ENCODE measurements at regions of chr21 and their contacts with region 1.

Region 1: GRCh38 chr21:44454747-44455523 is at the start of gene LRRC3:
- DNase-seq: peak; percentile 96
- ATAC-seq: peak; percentile 97
- H3K4me3 Mint-ChIP-seq: peak within 1 kb of the TSS; percentile 69
- H3K27ac Mint-ChIP-seq: no peak within 1 kb of the TSS
- H3K4me1 Mint-ChIP-seq: peaks cover 4% of the 10 kb centered on the region; the same call in 1 of the 2 replicates
- H3K27me3 Mint-ChIP-seq: peaks cover 17% of the 10 kb centered on the region
- CTCF ChIP-seq: no peak
- total RNA-seq, gene LRRC3: 4.4 to 5.7 TPM (median 4.7 TPM) in 3 replicates

Region 2: GRCh38 chr21:44338971-44339910 is 115.7 kb before region 1 on chr21 and contains the start of gene CFAP410:
- CTCF ChIA-PET with region 1: interaction called, 13 read pairs
- POLR2A ChIA-PET with region 1: interaction called, 4 read pairs
- DNase-seq: peak; percentile 95
- ATAC-seq: peak; percentile 90
- H3K4me3 Mint-ChIP-seq: peak within 1 kb of the TSS; percentile 84
- H3K27ac Mint-ChIP-seq: peak within 1 kb of the TSS; percentile 93
- H3K4me1 Mint-ChIP-seq: peaks cover 38% of the 10 kb centered on the region
- H3K27me3 Mint-ChIP-seq: no peaks in the 10 kb centered on the region
- CTCF ChIP-seq: no peak
- total RNA-seq, gene CFAP410: 14.0 to 19.3 TPM (median 15.8 TPM) in 3 replicates

Region 3: DNA sequence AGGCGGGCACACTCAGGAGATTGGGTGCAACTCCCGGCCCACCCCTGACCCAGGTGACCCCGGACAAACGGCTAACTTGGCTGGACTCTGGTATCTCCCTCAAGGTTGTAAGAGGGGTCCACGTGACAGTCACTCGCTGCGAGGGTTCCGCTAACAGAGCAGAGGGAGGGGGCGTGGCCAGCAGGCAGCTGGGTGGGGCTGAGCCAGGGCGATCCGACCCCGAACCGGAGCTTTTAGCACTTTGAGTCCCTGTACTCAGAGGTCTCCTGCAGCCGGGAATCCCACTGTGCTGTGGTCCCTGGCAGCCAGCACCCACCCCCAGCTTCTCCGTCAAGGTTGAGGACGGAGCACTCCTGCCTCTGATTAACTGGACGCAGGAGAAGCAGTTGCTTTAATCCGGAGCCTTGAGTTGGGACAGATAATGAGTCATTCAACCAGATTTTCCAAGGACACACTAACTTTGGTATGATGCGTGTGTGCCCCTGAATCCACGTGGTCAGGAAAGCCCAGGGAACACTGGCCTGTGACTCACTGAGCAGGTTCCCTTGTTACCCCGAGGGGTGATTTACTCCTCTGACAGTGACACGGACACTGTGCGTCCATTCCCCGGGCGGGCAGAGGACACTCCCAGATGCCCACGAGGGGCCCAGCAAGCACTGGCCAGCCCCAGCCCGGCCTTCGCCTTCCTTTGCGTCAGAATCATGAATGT is 84.8 kb before region 1 on chr21:
- CTCF ChIA-PET with region 1: interaction called, 10 read pairs
- POLR2A ChIA-PET with region 1: no interaction called
- DNase-seq: peak; percentile 71
- ATAC-seq: peak; percentile 75
- H3K4me3 Mint-ChIP-seq: peak overlapping the region; percentile 50
- H3K27ac Mint-ChIP-seq: no peak overlapping the region
- H3K4me1 Mint-ChIP-seq: peaks cover 10% of the 10 kb centered on the region; the same call in 1 of the 2 replicates
- H3K27me3 Mint-ChIP-seq: peaks cover 36% of the 10 kb centered on the region
- CTCF ChIP-seq: no peak

Region 4: DNA sequence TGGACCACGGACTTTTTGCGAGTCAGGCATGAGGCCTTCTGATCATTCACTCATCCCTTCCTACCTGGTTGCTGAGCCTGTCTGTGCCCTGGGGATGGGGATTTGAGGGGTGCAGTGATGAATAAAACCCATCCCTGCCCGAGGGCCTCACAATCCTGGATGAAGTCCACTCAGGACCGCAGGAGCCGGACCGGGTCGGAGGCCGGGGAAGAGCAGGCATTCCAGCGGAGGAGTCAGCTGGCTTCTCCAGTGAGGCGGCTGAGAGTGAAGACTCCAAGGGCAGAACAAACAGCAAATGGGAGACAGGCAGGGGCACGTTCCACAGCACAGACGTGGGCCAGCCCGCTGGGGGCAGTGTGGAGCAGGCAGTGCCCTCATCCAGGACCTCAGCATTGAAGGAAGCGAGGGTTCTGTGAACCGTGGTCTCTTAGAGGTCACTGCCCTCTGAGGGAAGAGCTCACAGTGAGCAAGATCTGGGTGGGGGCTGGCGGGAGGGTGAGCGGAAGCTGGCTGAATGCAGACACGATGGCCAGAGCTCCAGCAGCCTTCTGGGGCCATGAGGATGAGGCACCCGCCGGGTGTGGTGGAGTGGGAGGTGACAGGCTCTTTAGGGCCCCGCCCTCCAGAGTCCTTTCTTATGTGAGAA is 10.5 kb before region 1 on chr21:
- CTCF ChIA-PET with region 1: interaction called, 31 read pairs
- POLR2A ChIA-PET with region 1: interaction called, 3 read pairs
- DNase-seq: peak; percentile 75
- ATAC-seq: peak; percentile 97
- H3K4me3 Mint-ChIP-seq: no peak overlapping the region
- H3K27ac Mint-ChIP-seq: no peak overlapping the region
- H3K4me1 Mint-ChIP-seq: no peaks in the 10 kb centered on the region
- H3K27me3 Mint-ChIP-seq: no peaks in the 10 kb centered on the region
- CTCF ChIP-seq: peak; percentile 44

Region 5: GRCh38 chr21:44485254-44485793 is 30.4 kb after region 1 on chr21:
- CTCF ChIA-PET with region 1: interaction called, 11 read pairs
- POLR2A ChIA-PET with region 1: no interaction called
- DNase-seq: peak; percentile 82
- ATAC-seq: peak; percentile 85
- H3K4me3 Mint-ChIP-seq: peak overlapping the region; percentile 85
- H3K27ac Mint-ChIP-seq: no peak overlapping the region
- H3K4me1 Mint-ChIP-seq: peaks cover 27% of the 10 kb centered on the region
- H3K27me3 Mint-ChIP-seq: no peaks in the 10 kb centered on the region; the same call in 1 of the 2 replicates
- CTCF ChIP-seq: no peak

Region 6: DNA sequence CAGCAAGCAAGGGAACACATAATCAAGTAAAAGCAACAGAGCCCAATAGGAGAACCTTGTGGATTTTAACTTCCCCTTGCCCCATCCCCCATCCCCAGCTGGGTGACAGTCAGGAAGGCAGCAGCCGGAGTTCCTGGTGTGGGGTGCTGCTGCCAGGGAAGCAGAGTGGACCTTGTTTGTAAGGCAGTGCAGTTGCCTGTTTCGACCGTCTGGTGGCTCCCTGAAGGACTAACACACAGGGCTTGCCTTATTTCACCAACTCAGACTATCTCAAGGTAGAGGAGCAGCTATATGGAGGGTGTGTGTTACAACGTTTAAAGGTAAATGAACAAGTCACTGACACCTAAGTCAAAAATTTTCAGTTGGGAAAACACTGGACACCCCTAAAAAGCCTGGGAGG is 163.6 kb after region 1 on chr21:
- CTCF ChIA-PET with region 1: no interaction called
- POLR2A ChIA-PET with region 1: no interaction called
- DNase-seq: peak; percentile 40
- ATAC-seq: peak; percentile 81
- H3K4me3 Mint-ChIP-seq: no peak overlapping the region
- H3K27ac Mint-ChIP-seq: no peak overlapping the region
- H3K4me1 Mint-ChIP-seq: peaks cover 31% of the 10 kb centered on the region
- H3K27me3 Mint-ChIP-seq: peaks cover 2% of the 10 kb centered on the region; the same call in 1 of the 2 replicates
- CTCF ChIP-seq: no peak

Measured in WTC11 (cell line).